ENCODE measurements at regions of chr11 and their contacts with region 1.

Region 1: GRCh38 chr11:12802418-12803085 is 128.3 kb downstream of the TEAD1 start:
- DNase-seq: peak; percentile 98
- H3K4me3 ChIP-seq: no peak overlapping the region
- H3K27ac ChIP-seq: peak overlapping the region; percentile 72
- H3K4me1 ChIP-seq: peaks cover 33% of the 10 kb centered on the region
- H3K27me3 ChIP-seq: no peaks in the 10 kb centered on the region
- CTCF ChIP-seq: no peak
- POLR2A ChIP-seq: no peak

Region 2: DNA sequence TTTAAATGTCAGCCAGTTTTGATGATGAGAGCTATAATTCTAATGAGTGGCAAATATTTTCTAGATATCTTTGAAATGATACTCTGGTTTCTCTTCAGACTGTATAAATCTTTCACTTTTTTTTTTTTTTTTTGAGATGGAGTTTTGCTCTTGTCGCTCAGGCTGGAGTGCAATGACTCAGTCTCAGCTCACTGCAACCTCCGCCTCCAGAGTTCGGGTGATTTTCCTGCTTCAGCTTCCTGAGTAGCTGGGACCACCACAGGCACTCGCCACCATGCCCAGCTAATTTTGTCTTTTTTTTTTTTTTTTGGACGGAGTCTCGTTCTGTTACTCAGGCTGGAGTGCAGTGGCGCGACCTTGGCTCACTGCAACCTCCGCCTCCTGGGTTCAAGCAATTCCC is 14.7 kb before region 1 on chr11:
- CTCF ChIA-PET with region 1: interaction called, 8 read pairs
- POLR2A ChIA-PET with region 1: no interaction called
- dilution Hi-C with region 1: no loop called
- intact Hi-C with region 1: loop called (anchors 1 kb)
- DNase-seq: peak; percentile 83
- H3K4me3 ChIP-seq: no peak overlapping the region
- H3K27ac ChIP-seq: peak overlapping the region; percentile 17
- H3K4me1 ChIP-seq: peaks cover 14% of the 10 kb centered on the region
- H3K27me3 ChIP-seq: no peaks in the 10 kb centered on the region
- CTCF ChIP-seq: no peak
- POLR2A ChIP-seq: no peak

Region 3: GRCh38 chr11:12813371-12814225 is 11.0 kb after region 1 on chr11:
- CTCF ChIA-PET with region 1: interaction called, 6 read pairs
- POLR2A ChIA-PET with region 1: no interaction called
- dilution Hi-C with region 1: no loop called
- intact Hi-C with region 1: loop called (anchors 1 kb)
- DNase-seq: peak; percentile 17
- H3K4me3 ChIP-seq: no peak overlapping the region
- H3K27ac ChIP-seq: no peak overlapping the region
- H3K4me1 ChIP-seq: peaks cover 15% of the 10 kb centered on the region
- H3K27me3 ChIP-seq: no peaks in the 10 kb centered on the region
- CTCF ChIP-seq: no peak
- POLR2A ChIP-seq: no peak

Region 4: GRCh38 chr11:12864316-12865156 is 62.0 kb after region 1 on chr11:
- CTCF ChIA-PET with region 1: interaction called, 3 read pairs
- POLR2A ChIA-PET with region 1: no interaction called
- dilution Hi-C with region 1: no loop called
- intact Hi-C with region 1: loop called (anchors 2 kb)
- DNase-seq: peak; percentile 97
- H3K4me3 ChIP-seq: no peak overlapping the region
- H3K27ac ChIP-seq: peak overlapping the region; percentile 32
- H3K4me1 ChIP-seq: peaks cover 7% of the 10 kb centered on the region
- H3K27me3 ChIP-seq: no peaks in the 10 kb centered on the region
- CTCF ChIP-seq: no peak
- POLR2A ChIP-seq: no peak

Measured in endothelial cell of umbilical vein (primary cell).